ENCODE measurements at regions of chrX and their contacts with region 1.

Region 1: GRCh38 chrX:107826238-107827029 is 768 bp downstream of the MID2 start:
- DNase-seq: peak; percentile 56
- ATAC-seq: peak; percentile 43
- H3K4me3 Mint-ChIP-seq: peak overlapping the region; percentile 75
- H3K27ac Mint-ChIP-seq: peak overlapping the region; percentile 78
- H3K4me1 Mint-ChIP-seq: peaks cover 46% of the 10 kb centered on the region
- H3K27me3 Mint-ChIP-seq: peaks cover 4% of the 10 kb centered on the region

Region 2: GRCh38 chrX:107716816-107717700 is 109.4 kb before region 1 on chrX:
- CTCF ChIA-PET with region 1: no interaction called
- POLR2A ChIA-PET with region 1: no interaction called
- intact Hi-C with region 1: loop called in 1 of 2 experiments (anchors 5 kb)
- DNase-seq: peak; percentile 88
- ATAC-seq: peak; percentile 88
- H3K4me3 Mint-ChIP-seq: peak overlapping the region; percentile 90
- H3K27ac Mint-ChIP-seq: peak overlapping the region; percentile 92
- H3K4me1 Mint-ChIP-seq: peaks cover 43% of the 10 kb centered on the region
- H3K27me3 Mint-ChIP-seq: no peaks in the 10 kb centered on the region

Region 3: GRCh38 chrX:107845625-107846024 is 19.2 kb after region 1 on chrX:
- CTCF ChIA-PET with region 1: interaction called, 3 read pairs
- POLR2A ChIA-PET with region 1: interaction called, 4 read pairs
- intact Hi-C with region 1: loop called in 1 of 2 experiments (anchors 1 kb)
- DNase-seq: peak; percentile 48
- ATAC-seq: peak; percentile 82
- H3K4me3 Mint-ChIP-seq: no peak overlapping the region
- H3K27ac Mint-ChIP-seq: no peak overlapping the region
- H3K4me1 Mint-ChIP-seq: peaks cover 9% of the 10 kb centered on the region
- H3K27me3 Mint-ChIP-seq: no peaks in the 10 kb centered on the region

Region 4: DNA sequence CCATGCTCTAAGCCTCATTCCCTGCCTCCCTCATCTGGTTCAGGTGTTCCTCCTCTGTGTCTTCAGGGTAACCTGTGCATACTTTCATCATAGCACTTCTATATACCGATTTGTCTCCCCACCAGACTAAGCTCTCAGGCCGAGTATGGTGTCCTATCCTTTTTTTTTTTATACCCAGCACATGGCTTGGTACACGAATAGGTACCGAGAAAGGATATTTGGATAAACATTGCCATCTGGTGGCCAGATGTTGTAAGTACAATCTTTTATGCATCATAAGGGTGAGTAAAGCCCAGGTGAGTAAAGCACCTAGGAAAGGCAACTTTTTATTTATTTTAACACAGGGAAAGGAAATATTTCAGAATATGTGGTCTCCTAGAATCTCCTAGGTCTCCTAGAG is 67.6 kb after region 1 on chrX:
- CTCF ChIA-PET with region 1: no interaction called
- POLR2A ChIA-PET with region 1: no interaction called
- intact Hi-C with region 1: loop called (anchors 5 to 10 kb)
- DNase-seq: peak; percentile 16
- ATAC-seq: peak; percentile 82
- H3K4me3 Mint-ChIP-seq: no peak overlapping the region
- H3K27ac Mint-ChIP-seq: no peak overlapping the region
- H3K4me1 Mint-ChIP-seq: no peaks in the 10 kb centered on the region
- H3K27me3 Mint-ChIP-seq: no peaks in the 10 kb centered on the region